ENCODE measurements at regions of chr16 and their contacts with region 1.

Region 1: GRCh38 chr16:8797364-8798173 is at the starts of genes PMM2 and TMEM186:
- DNase-seq: peak; percentile 99
- H3K4me3 ChIP-seq: peak within 1 kb of the TSS; percentile 90
- H3K27ac ChIP-seq: peak within 1 kb of the TSS; percentile 77
- H3K4me1 ChIP-seq: peaks cover 14% of the 10 kb centered on the region
- H3K27me3 ChIP-seq: no peaks in the 10 kb centered on the region
- CTCF ChIP-seq: no peak
- total RNA-seq, gene PMM2: 60.7 to 88.1 TPM
- total RNA-seq, gene TMEM186: 11.9 to 20.3 TPM

Region 2: GRCh38 chr16:8567750-8568617 is 229.6 kb before region 1 on chr16:
- intact Hi-C with region 1: loop called (anchors 5 kb)
- DNase-seq: peak; percentile 82
- H3K4me3 ChIP-seq: no peak overlapping the region
- H3K27ac ChIP-seq: no peak overlapping the region
- H3K4me1 ChIP-seq: no peaks in the 10 kb centered on the region
- H3K27me3 ChIP-seq: no peaks in the 10 kb centered on the region
- CTCF ChIP-seq: peak; percentile 99

Measured in colonic mucosa (tissue), 4 donors.